Activated CD8-positive, alpha-beta T cell treated with anti-CD3 and anti-CD28 coated beads, Interleukin-2, amount 10 ng/mL, durations not matched to agents 7 days and 5 days (primary cell): ENCODE measurements at regions of chr3 and their contacts with region 1.

Region 1: GRCh38 chr3:112498914-112499711 is at the start of gene BTLA:
- DNase-seq: peak; percentile 63
- ATAC-seq: peak; percentile 72
- H3K4me3 Mint-ChIP-seq: peak within 1 kb of the TSS; percentile 97
- H3K27ac Mint-ChIP-seq: peak within 1 kb of the TSS; percentile 95
- H3K4me1 Mint-ChIP-seq: peaks cover 44% of the 10 kb centered on the region
- H3K27me3 Mint-ChIP-seq: no peaks in the 10 kb centered on the region
- total RNA-seq, gene BTLA: 22.3 to 26.0 TPM

Region 2: GRCh38 chr3:112136959-112137693 is 362.0 kb before region 1 on chr3:
- CTCF ChIA-PET with region 1: interaction called, 14 read pairs
- POLR2A ChIA-PET with region 1: no interaction called
- DNase-seq: peak; percentile 67
- ATAC-seq: no peak
- H3K4me3 Mint-ChIP-seq: no peak overlapping the region
- H3K27ac Mint-ChIP-seq: no peak overlapping the region
- H3K4me1 Mint-ChIP-seq: peaks cover 36% of the 10 kb centered on the region
- H3K27me3 Mint-ChIP-seq: no peaks in the 10 kb centered on the region

Region 3: GRCh38 chr3:112482675-112483074 is 16.4 kb before region 1 on chr3:
- CTCF ChIA-PET with region 1: interaction called, 10 read pairs
- POLR2A ChIA-PET with region 1: interaction called, 7 read pairs
- DNase-seq: no peak
- ATAC-seq: no peak
- H3K4me3 Mint-ChIP-seq: peak overlapping the region; percentile 53
- H3K27ac Mint-ChIP-seq: peak overlapping the region; percentile 80
- H3K4me1 Mint-ChIP-seq: peaks cover 49% of the 10 kb centered on the region
- H3K27me3 Mint-ChIP-seq: no peaks in the 10 kb centered on the region